AG04449 (cell line): ENCODE measurements at regions of chr4 and their contacts with region 1.

Region 1: DNA sequence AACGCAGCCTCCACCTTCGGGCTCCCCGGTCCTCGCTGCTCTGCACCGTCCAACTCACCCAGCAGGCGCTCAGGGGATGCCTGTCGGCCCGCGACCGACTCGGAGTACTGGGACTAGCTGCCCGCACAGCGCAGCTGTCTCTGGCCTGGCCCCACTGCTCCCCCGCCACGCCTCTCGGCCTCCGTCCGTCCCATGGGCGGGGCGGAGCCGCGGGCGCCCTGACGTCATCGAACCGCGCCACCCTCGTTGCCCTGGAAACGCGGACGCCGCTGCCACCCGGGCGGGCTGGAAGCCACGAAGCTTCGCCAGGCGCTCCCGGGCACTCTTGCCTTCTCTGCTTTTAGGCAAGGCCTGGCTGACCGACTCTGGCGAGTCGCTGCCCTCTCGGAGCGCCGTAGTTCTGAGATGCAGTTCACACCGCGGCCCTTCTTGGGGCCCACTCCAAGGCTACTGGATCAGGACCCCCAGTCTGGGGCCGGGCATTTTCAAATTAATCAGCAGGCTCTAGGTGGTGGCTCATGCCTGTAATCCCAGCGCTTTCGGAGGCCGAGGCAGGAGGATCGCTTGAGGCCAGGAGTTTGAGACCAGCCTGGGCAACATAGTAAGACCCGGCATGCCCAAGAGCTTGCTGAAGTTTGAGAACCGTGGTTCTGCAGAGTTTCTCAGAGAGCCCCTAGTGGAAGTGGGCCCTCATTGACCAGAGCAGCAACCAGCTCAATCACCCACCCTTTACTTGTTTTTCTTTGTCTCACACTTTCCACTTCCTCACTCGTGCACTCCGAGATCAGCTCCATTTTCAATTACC is 12.0 kb downstream of the ACOX3 start:
- DNase-seq: no peak
- H3K4me3 ChIP-seq: peak overlapping the region; percentile 88
- CTCF ChIP-seq: peak; percentile 58

Region 2: DNA sequence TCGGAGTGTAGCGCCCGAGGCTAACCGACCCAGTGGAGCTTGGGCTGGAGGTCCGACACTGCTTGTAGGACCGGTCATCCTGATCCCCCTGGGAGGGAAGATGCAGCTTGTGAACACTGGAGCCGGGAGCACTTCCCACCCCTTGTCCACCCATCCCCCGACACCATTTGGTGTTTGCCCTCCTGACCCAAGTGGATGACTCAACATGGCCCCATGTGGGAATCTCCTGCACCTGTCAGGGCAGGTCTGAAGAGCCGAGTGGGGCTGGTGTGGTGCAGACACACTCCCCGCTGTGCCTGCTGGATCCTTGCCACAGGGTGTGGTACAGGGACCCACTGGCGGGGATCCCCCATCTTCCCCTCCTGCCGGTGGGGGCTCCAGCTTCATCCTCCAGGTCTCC is 398.8 kb before region 1 on chr4:
- CTCF ChIA-PET with region 1: no interaction called
- POLR2A ChIA-PET with region 1: no interaction called
- DNase-seq: no peak
- H3K4me3 ChIP-seq: no peak overlapping the region
- CTCF ChIP-seq: no peak

Region 3: GRCh38 chr4:8440492-8441341 is 12.2 kb after region 1 on chr4 and contains the starts of genes ACOX3 and TRMT44:
- CTCF ChIA-PET with region 1: interaction called, 6 read pairs
- POLR2A ChIA-PET with region 1: interaction called, 10 read pairs
- DNase-seq: peak; percentile 26
- H3K4me3 ChIP-seq: peak within 1 kb of the TSS; percentile 81
- CTCF ChIP-seq: no peak

Region 4: GRCh38 chr4:8586671-8587455 is 158.4 kb after region 1 on chr4:
- CTCF ChIA-PET with region 1: no interaction called
- POLR2A ChIA-PET with region 1: no interaction called
- DNase-seq: no peak
- H3K4me3 ChIP-seq: no peak overlapping the region
- CTCF ChIP-seq: no peak